ENCODE measurements at regions of chr7 and their contacts with region 1.

Region 1: DNA sequence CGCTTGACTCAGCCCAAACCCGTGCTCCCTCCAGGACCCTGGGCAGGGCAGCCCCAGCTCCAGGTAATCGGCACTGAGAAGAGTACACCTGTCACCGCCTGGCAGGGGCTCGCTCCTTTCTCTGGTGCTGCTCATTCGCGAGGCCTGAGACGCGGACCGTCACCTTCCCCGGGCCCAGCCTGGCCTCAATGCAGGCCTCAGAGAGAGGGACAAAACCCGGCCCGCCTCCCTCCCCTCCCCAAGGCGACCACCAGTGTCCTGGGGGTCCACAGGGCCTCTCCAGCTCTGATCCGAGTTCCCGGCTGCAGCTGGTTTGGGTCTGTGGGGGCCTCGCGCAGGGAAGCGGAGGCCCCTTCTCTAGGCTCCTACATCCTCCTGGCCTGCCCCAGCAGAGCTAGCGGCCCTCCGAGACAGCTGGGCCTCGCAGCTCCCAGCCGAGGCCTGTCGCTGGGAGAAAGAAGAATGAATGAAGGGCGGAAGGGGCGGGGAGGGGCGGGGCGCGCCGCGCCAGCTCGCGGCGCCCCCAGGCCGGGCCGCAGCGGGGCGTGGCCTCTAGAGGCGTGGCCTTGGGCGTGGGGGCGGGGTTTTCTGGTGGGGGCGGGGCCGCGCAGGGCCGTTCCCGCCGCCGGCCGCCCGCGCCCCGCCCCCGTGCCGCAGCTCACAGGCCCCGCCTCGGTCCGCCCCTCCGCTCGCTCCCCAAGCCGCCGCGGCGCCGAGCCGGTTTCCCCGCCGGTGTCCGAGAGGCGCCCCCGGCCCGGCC is at the start of gene LIMK1:
- DNase-seq: peak; percentile 95 to 99 (median 99)
- ATAC-seq: peak; percentile 85
- H3K4me3 ChIP-seq: peak within 1 kb of the TSS; percentile 72
- H3K27ac ChIP-seq: peak within 1 kb of the TSS; percentile 84
- H3K4me1 ChIP-seq: peaks cover 20 to 40% of the 10 kb centered on the region in 2 experiments
- H3K27me3 ChIP-seq: no peaks in the 10 kb centered on the region
- CTCF ChIP-seq: no peak
- EP300 ChIP-seq: no peak
- POLR2A ChIP-seq: peak; percentile 77
- RAD21 ChIP-seq: no peak
- polyA plus RNA-seq, gene LIMK1: 0.14 to 0.38 TPM

Region 2: GRCh38 chr7:74002474-74003017 is 80.8 kb before region 1 on chr7:
- CTCF ChIA-PET with region 1: no interaction called
- POLR2A ChIA-PET with region 1: no interaction called
- in situ Hi-C with region 1: no loop called
- intact Hi-C with region 1: no loop called
- DNase-seq: no peak
- ATAC-seq: no peak
- H3K4me3 ChIP-seq: no peak overlapping the region
- H3K27ac ChIP-seq: no peak overlapping the region
- H3K4me1 ChIP-seq: peaks cover 0 to 5% of the 10 kb centered on the region in 2 experiments; a peak in 1 of 5 replicates
- H3K27me3 ChIP-seq: peaks cover 28 to 73% of the 10 kb centered on the region in 2 experiments
- CTCF ChIP-seq: no peak
- EP300 ChIP-seq: no peak
- POLR2A ChIP-seq: no peak
- RAD21 ChIP-seq: no peak

Region 3: GRCh38 chr7:74068393-74069085 is 14.8 kb before region 1 on chr7:
- CTCF ChIA-PET with region 1: no interaction called
- POLR2A ChIA-PET with region 1: no interaction called
- in situ Hi-C with region 1: no loop called
- intact Hi-C with region 1: no loop called
- DNase-seq: peak in 2 of 4 experiments; percentile 5 to 6
- ATAC-seq: no peak
- H3K4me3 ChIP-seq: no peak overlapping the region
- H3K27ac ChIP-seq: no peak overlapping the region
- H3K4me1 ChIP-seq: peaks cover 0 to 7% of the 10 kb centered on the region in 2 experiments; a peak in 2 of 5 replicates
- H3K27me3 ChIP-seq: peaks cover 0 to 10% of the 10 kb centered on the region in 2 experiments; a peak in 1 of 5 replicates
- CTCF ChIP-seq: no peak
- EP300 ChIP-seq: no peak
- POLR2A ChIP-seq: no peak
- RAD21 ChIP-seq: no peak

Region 4: DNA sequence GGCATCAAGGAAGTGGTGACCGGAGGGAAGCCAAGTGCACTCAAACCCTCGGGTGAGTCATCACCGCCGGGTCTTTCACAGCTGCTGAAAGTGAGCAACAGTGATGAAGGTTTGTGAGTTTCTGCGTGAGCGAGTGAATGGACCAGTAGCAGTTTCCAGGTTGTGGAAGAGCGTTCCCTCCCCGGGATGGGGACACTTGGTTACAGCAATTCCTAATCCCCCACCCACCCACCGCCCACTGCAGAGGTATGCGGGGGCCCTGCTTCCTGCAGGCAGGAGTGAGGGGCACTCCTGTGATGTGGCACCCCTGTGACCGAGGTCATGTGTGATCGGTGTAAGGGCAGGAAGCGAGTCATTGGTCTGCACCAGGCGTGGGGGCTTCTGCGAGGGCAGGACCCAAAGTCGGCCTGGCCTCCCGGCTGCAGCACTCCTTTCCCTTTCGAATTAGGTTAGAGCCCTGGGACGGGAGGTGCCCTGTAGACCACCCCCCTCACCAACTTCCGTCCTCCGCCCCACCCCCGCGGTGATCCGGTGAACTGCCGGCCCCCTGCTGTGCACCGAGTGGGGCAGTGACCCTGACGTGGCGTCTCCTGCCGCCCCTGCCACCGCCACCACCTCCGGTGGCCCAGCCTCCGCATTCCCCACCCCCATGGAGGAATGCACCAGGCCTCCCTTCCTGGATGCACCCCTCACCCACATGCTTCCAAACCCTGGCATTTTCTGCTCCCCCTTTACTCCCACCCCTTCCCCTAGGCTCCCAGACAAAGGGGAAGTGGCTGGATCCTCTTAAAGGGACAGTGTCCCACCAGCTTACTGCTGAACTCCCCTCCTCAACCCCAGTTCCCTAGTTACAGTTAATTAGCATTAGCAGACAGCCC is 11.2 kb after region 1 on chr7:
- CTCF ChIA-PET with region 1: no interaction called
- POLR2A ChIA-PET with region 1: interaction called, 10 read pairs
- in situ Hi-C with region 1: no loop called
- intact Hi-C with region 1: no loop called
- DNase-seq: peak; percentile 58 to 75 (median 68)
- ATAC-seq: peak; percentile 57
- H3K4me3 ChIP-seq: peak overlapping the region; percentile 12; the same call in 1 of the 2 replicates
- H3K27ac ChIP-seq: peak overlapping the region; percentile 45; the same call in 2 of the 3 replicates
- H3K4me1 ChIP-seq: peaks cover 15 to 35% of the 10 kb centered on the region in 2 experiments
- H3K27me3 ChIP-seq: no peaks in the 10 kb centered on the region
- CTCF ChIP-seq: no peak
- EP300 ChIP-seq: no peak
- POLR2A ChIP-seq: no peak
- RAD21 ChIP-seq: no peak

Region 5: DNA sequence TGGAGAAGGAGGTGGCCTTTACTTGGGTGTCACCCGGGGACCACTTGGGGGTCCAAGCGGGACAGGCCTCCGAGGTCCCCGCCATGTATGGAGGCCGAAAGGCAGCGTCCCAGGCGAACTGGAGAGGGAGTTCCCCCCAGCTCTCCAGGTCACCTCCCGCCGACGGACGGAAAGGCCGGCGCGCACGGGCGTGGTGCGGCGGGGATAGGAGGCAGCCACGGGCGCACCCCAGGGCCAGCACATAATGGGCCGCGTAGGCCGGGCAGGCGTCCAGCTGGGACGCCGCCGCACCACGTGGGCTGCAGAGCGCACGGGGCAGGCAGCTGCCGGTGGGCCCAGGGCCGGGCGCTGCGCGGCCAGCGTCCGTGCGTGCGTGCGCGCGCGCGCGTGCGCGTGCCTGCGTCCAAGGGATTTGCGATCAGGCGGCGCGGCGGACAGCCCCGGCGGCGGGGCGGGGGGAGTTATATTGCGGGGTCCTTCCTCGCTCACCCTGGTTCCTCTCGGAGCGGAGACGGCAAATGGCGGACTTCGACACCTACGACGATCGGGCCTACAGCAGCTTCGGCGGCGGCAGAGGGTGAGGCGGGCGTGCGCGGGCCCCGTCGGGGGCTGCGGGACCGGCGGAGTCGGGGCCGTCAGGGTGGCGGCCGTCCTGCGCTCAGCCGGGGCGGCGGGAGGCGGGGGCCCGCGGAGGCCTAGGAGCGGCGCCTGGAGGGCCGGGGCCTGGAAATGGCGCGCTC is 90.7 kb after region 1 on chr7 and contains the start of gene EIF4H:
- CTCF ChIA-PET with region 1: no interaction called
- POLR2A ChIA-PET with region 1: interaction called, 10 read pairs
- in situ Hi-C with region 1: no loop called
- intact Hi-C with region 1: loop called (anchors 5 kb)
- DNase-seq: peak; percentile 96 to 99 (median 97)
- ATAC-seq: peak; percentile 93
- H3K4me3 ChIP-seq: peak within 1 kb of the TSS; percentile 79
- H3K27ac ChIP-seq: peak within 1 kb of the TSS; percentile 91
- H3K4me1 ChIP-seq: peaks cover 24 to 35% of the 10 kb centered on the region in 2 experiments; a peak in 4 of 5 replicates
- H3K27me3 ChIP-seq: no peaks in the 10 kb centered on the region
- CTCF ChIP-seq: no peak
- EP300 ChIP-seq: 0 out of 2 replicates have a peak, but pooled peaks have one; percentile 14
- POLR2A ChIP-seq: peak; percentile 76
- RAD21 ChIP-seq: no peak
- polyA plus RNA-seq, gene EIF4H: 11.0 to 15.9 TPM